PC-9 (cell line): ENCODE measurements at regions of chr14 and their contacts with region 1.

Region 1: GRCh38 chr14:61837336-61838229 is 75.4 kb downstream of the SNAPC1 start:
- DNase-seq: peak; percentile 69 to 81
- H3K4me3 ChIP-seq: no peak overlapping the region
- H3K27ac ChIP-seq: peak overlapping the region; percentile 60
- H3K4me1 ChIP-seq: peaks cover 21% of the 10 kb centered on the region
- H3K27me3 ChIP-seq: no peaks in the 10 kb centered on the region
- CTCF ChIP-seq: peak; percentile 97

Region 2: DNA sequence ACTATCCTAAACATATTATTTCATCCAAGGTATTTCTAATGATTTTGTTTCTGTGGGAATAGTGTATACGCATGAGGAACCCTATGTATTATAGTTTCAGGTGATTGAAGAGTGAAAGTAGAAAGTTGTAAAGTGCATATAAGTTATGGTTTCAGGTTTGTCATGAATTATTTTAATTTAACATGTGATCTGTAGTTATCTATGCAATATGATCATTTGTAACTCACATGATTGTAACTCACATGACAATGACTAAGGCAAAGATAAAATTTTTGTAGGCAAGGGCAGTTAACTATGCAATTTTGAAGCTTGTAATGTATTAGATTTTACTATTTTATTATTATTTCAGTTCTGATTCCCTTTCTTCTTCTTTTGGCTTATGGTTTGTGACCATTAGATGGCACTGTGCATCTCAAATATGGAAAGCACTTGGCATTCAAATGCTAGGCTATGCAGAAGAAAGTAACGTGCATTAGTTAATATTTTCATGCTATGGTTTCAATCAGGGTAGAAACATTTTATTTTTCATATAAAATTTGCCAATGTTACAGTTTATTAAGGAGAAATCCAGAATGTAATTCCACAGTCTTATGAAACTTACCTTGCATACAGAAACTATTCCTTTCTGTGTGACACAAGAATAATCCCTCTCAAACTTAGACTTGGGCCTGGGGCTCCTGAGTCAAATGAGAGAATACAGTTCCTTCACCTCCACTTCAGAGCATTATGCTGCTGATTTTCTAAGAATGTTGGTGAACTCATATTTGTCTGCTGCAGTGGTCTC is 540.7 kb before region 1 on chr14:
- CTCF ChIA-PET with region 1: no interaction called
- POLR2A ChIA-PET with region 1: no interaction called
- intact Hi-C with region 1: loop called (anchors 1 kb)
- DNase-seq: peak; percentile 12 to 70
- H3K4me3 ChIP-seq: no peak overlapping the region
- H3K27ac ChIP-seq: no peak overlapping the region
- H3K4me1 ChIP-seq: 0 out of 2 replicates have a peak, but pooled peaks cover 4% of the 10 kb centered on the region
- H3K27me3 ChIP-seq: no peaks in the 10 kb centered on the region
- CTCF ChIP-seq: peak; percentile 84

Region 3: DNA sequence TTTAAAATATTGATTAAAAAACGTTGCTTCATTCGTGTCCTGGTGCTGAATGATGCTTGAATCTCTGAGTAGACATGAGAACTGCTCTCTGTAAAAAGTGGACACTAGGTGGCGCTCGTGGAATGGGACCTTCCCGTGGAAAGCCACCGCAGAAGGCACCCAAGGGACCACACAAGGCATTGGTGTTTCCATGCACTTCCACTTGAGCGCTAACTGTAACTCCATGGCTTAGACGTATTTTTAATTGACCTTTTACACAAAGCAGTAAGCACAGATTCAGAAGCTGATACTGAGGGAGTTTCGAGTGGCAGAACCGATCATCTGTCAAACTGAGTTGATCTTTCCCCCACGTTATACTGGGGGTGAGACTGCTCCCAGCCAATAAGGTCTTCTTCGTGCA is 380.9 kb before region 1 on chr14:
- CTCF ChIA-PET with region 1: interaction called, 19 read pairs
- POLR2A ChIA-PET with region 1: no interaction called
- intact Hi-C with region 1: loop called (anchors 1 kb)
- DNase-seq: peak; percentile 65 to 72
- H3K4me3 ChIP-seq: no peak overlapping the region
- H3K27ac ChIP-seq: no peak overlapping the region
- H3K4me1 ChIP-seq: peaks cover 13% of the 10 kb centered on the region
- H3K27me3 ChIP-seq: no peaks in the 10 kb centered on the region
- CTCF ChIP-seq: peak; percentile 94

Region 4: GRCh38 chr14:61744239-61744638 is 93.3 kb before region 1 on chr14:
- CTCF ChIA-PET with region 1: no interaction called
- POLR2A ChIA-PET with region 1: interaction called, 11 read pairs
- intact Hi-C with region 1: no loop called
- DNase-seq: no peak
- H3K4me3 ChIP-seq: no peak overlapping the region
- H3K27ac ChIP-seq: peak overlapping the region; percentile 2; the same call in 1 of the 2 replicates
- H3K4me1 ChIP-seq: peaks cover 28% of the 10 kb centered on the region
- H3K27me3 ChIP-seq: no peaks in the 10 kb centered on the region
- CTCF ChIP-seq: no peak